Heart left ventricle (tissue), 16 donors: ENCODE measurements at regions of chr2 and their contacts with region 1.

Region 1: DNA sequence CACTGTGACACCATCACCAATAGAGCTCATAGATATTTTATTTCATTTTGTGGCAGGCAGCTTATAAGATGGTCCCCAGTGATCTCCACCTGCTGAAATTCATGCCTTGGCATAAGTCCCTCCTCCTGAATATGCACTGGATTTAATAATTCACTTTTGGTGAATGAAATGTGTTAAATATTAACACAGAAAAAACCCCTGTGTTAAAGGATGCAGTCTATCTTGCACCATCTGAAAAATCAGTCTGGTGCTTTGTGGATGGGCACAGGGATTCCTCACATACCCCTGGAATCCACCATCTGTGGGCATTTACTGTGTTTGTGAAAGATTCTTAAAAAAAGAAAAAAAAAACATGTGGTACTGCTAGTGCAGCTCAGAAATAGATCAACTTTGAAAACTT is 26.1 kb upstream of the WIPF1 start:
- DNase-seq: no peak
- ATAC-seq: no peak
- H3K4me3 ChIP-seq: no peak overlapping the region
- H3K27ac ChIP-seq: no peak overlapping the region
- H3K4me1 ChIP-seq: peaks cover 0 to 49% (median 0%) of the 10 kb centered on the region in 12 donors
- H3K27me3 ChIP-seq: no peaks in the 10 kb centered on the region
- CTCF ChIP-seq: no peak
- POLR2A ChIP-seq: no peak

Region 2: GRCh38 chr2:174341286-174341994 is 282.2 kb before region 1 on chr2:
- intact Hi-C with region 1: no loop called
- DNase-seq: peak; percentile 81 to 94 (median 82)
- ATAC-seq: peak; percentile 84 to 94 (median 90)
- H3K4me3 ChIP-seq: peak overlapping the region in 1 of 12 donors; percentile 28
- H3K27ac ChIP-seq: no peak overlapping the region
- H3K4me1 ChIP-seq: peaks cover 7 to 61% (median 33%) of the 10 kb centered on the region in 12 donors
- H3K27me3 ChIP-seq: peaks cover 69 to 95% (median 87%) of the 10 kb centered on the region in 9 donors
- CTCF ChIP-seq: peak; percentile 94 to 100 (median 98)
- POLR2A ChIP-seq: no peak

Region 3: GRCh38 chr2:174673876-174674275 is 50.2 kb after region 1 on chr2:
- intact Hi-C with region 1: loop called in 1 of 10 experiments (anchors 10 kb)
- DNase-seq: no peak
- ATAC-seq: no peak
- H3K4me3 ChIP-seq: no peak overlapping the region
- H3K27ac ChIP-seq: no peak overlapping the region
- H3K4me1 ChIP-seq: peaks cover 0 to 30% (median 11%) of the 10 kb centered on the region in 12 donors
- H3K27me3 ChIP-seq: no peaks in the 10 kb centered on the region
- CTCF ChIP-seq: no peak
- POLR2A ChIP-seq: no peak

Region 4: GRCh38 chr2:175004980-175005732 is 381.5 kb after region 1 on chr2 and contains the start of gene CHN1:
- intact Hi-C with region 1: no loop called
- DNase-seq: peak; percentile 87 to 93 (median 89)
- ATAC-seq: peak; percentile 47 to 90 (median 80)
- H3K4me3 ChIP-seq: peak within 1 kb of the TSS; percentile 64 to 92 (median 86)
- H3K27ac ChIP-seq: peak within 1 kb of the TSS; percentile 43 to 96 (median 90)
- H3K4me1 ChIP-seq: peaks cover 0 to 59% (median 24%) of the 10 kb centered on the region in 12 donors
- H3K27me3 ChIP-seq: peaks cover 0 to 42% (median 0%) of the 10 kb centered on the region in 9 donors
- CTCF ChIP-seq: peak in 5 of 12 donors; percentile 16 to 44 (median 24)
- POLR2A ChIP-seq: peak in 1 of 2 donors; percentile 61
- total RNA-seq, gene CHN1: 8.6 to 24.3 (median 19.3) TPM